H1 (cell line): ENCODE measurements at regions of chr14 and their contacts with region 1.

Region 1: GRCh38 chr14:41606532-41607303 is at the start of gene LRFN5:
- DNase-seq: peak in 1 of 2 experiments; percentile 82
- H3K4me3 ChIP-seq: peak within 1 kb of the TSS; percentile 74 to 89 (median 77)
- H3K27ac ChIP-seq: no peak within 1 kb of the TSS
- H3K4me1 ChIP-seq: peaks cover 0 to 15% (median 7%) of the 10 kb centered on the region in 4 experiments; a peak in 6 of 7 replicates
- H3K27me3 ChIP-seq: peaks cover 18 to 46% (median 35%) of the 10 kb centered on the region in 4 experiments
- CTCF ChIP-seq: no peak
- EP300 ChIP-seq: no peak
- POLR2A ChIP-seq: no peak
- RAD21 ChIP-seq: no peak
- total RNA-seq, gene LRFN5: 4.7 and 5.4 TPM in 2 replicates

Region 2: DNA sequence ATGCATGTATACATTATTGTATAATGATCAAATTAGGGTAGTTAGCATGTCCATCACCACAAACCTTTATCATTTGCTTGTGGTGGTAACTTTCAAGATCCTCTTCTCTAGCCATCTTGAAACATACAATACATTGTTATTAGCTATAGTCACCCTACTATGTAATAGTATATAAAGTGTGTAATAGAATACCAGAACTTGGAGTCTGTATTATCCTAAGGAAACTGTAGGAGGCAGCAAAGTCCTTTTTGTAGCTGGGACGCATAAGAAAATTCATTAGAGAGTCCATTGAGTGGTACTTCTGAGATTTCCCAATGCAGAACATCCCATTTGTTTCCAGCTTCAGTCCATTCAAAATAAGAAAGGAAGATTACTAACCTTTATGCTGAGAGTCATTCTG is 326.0 kb before region 1 on chr14:
- CTCF ChIA-PET with region 1: interaction called, 36 read pairs
- POLR2A ChIA-PET with region 1: interaction called, 3 read pairs
- DNase-seq: no peak
- H3K4me3 ChIP-seq: no peak overlapping the region
- H3K27ac ChIP-seq: no peak overlapping the region
- H3K4me1 ChIP-seq: no peaks in the 10 kb centered on the region
- H3K27me3 ChIP-seq: no peaks in the 10 kb centered on the region
- CTCF ChIP-seq: peak in 2 of 3 experiments; percentile 23 to 37; a peak in 2 of 4 replicates
- EP300 ChIP-seq: no peak
- POLR2A ChIP-seq: no peak
- RAD21 ChIP-seq: peak; percentile 73 to 84

Region 3: DNA sequence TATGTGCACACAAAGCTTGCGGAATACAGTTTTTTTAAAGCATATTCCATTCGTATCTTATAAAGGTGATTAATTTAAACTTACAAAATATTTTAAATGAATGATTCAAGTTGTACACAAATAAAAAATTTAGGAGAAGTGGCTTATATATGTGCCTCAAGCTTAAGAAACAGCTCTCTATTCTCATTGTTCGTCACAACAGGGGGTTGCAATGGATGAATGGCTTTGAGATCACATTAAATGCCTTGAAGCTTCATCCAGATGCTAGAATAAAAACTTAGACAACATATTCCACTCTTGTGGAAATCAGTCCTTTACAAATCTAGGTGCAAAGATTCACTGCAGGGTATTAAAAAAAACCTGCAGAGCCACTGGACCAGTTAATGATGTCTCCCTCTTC is 303.9 kb before region 1 on chr14:
- CTCF ChIA-PET with region 1: interaction called, 13 read pairs
- POLR2A ChIA-PET with region 1: interaction called, 4 read pairs
- DNase-seq: no peak
- H3K4me3 ChIP-seq: no peak overlapping the region
- H3K27ac ChIP-seq: no peak overlapping the region
- H3K4me1 ChIP-seq: peaks cover 0 to 10% (median 2%) of the 10 kb centered on the region in 4 experiments; a peak in 1 of 7 replicates
- H3K27me3 ChIP-seq: no peaks in the 10 kb centered on the region
- CTCF ChIP-seq: no peak
- EP300 ChIP-seq: no peak
- POLR2A ChIP-seq: no peak
- RAD21 ChIP-seq: no peak

Region 4: GRCh38 chr14:41409806-41410205 is 196.9 kb before region 1 on chr14:
- CTCF ChIA-PET with region 1: no interaction called
- POLR2A ChIA-PET with region 1: no interaction called
- DNase-seq: no peak
- H3K4me3 ChIP-seq: no peak overlapping the region
- H3K27ac ChIP-seq: no peak overlapping the region
- H3K4me1 ChIP-seq: no peaks in the 10 kb centered on the region
- H3K27me3 ChIP-seq: no peaks in the 10 kb centered on the region
- CTCF ChIP-seq: no peak
- EP300 ChIP-seq: no peak
- POLR2A ChIP-seq: no peak
- RAD21 ChIP-seq: no peak

Region 5: DNA sequence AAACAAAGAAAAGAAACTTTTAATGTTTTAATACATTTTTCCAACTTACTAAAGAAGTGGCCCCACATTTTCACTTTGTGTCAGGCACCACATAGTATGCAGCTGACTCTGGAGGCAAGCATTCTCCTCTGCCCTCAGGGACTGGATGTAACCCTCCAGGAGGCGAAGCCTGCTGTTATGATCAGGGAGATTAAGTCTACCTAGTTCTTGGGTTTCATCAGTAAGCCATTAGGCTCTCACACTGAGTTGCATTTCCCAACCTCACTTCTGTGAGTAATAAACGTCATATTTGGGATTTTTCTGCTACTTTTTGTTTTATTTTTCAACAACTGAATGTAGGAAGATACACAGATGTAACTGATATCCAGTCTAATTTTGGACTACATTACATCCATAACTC is 101.2 kb before region 1 on chr14:
- CTCF ChIA-PET with region 1: no interaction called
- POLR2A ChIA-PET with region 1: no interaction called
- DNase-seq: peak in 1 of 2 experiments; percentile 29
- H3K4me3 ChIP-seq: no peak overlapping the region
- H3K27ac ChIP-seq: no peak overlapping the region
- H3K4me1 ChIP-seq: no peaks in the 10 kb centered on the region
- H3K27me3 ChIP-seq: no peaks in the 10 kb centered on the region
- CTCF ChIP-seq: no peak
- EP300 ChIP-seq: no peak
- POLR2A ChIP-seq: no peak
- RAD21 ChIP-seq: no peak

Region 6: DNA sequence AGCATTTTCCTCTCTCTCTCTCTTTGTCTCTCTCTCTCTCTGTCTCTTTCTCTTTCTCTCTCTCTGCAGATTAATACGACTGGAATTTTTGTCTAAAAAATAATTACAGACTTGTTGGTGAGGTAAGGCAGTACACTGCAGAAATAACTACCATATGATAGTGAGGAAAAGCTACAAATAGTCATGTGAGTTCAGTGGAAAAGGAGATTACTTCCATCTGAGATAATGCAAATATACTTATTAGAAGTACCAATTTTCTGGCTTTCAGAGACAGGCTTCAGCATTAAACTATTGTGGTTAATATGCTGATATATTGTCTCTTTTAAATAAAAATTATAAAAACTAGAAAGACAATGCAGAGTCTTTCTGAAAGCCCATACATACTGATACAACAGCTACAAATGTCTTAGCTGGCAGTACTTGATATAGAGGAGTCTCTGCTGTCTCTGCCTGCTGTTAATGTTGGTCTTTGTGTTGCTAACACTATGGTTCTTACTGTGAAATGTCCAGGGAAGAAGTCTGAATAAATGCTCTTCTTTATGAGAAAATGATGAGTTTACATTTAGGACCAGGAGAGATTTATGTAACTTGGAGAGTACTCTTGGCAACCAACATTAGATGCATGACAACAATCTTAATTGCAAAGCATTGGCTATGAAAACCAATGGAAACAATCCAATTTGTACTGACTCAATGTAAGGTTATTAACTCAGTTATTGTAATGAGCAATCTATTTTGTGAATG is 167.0 kb after region 1 on chr14:
- CTCF ChIA-PET with region 1: no interaction called
- POLR2A ChIA-PET with region 1: no interaction called
- DNase-seq: no peak
- H3K4me3 ChIP-seq: no peak overlapping the region
- H3K27ac ChIP-seq: no peak overlapping the region
- H3K4me1 ChIP-seq: no peaks in the 10 kb centered on the region
- H3K27me3 ChIP-seq: no peaks in the 10 kb centered on the region
- CTCF ChIP-seq: no peak
- EP300 ChIP-seq: no peak
- POLR2A ChIP-seq: no peak
- RAD21 ChIP-seq: no peak